Activated naive CD4-positive, alpha-beta T cell treated with anti-CD3 and anti-CD28 coated beads for 36 hours (primary cell): ENCODE measurements at regions of chr11 and their contacts with region 1.

Region 1: GRCh38 chr11:77127232-77127911 is 674 bp upstream of the MYO7A start:
- DNase-seq: peak; percentile 64
- H3K4me3 Mint-ChIP-seq: peak overlapping the region; percentile 59
- H3K27ac Mint-ChIP-seq: no peak overlapping the region
- H3K4me1 Mint-ChIP-seq: peaks cover 6% of the 10 kb centered on the region
- H3K27me3 Mint-ChIP-seq: no peaks in the 10 kb centered on the region

Region 2: DNA sequence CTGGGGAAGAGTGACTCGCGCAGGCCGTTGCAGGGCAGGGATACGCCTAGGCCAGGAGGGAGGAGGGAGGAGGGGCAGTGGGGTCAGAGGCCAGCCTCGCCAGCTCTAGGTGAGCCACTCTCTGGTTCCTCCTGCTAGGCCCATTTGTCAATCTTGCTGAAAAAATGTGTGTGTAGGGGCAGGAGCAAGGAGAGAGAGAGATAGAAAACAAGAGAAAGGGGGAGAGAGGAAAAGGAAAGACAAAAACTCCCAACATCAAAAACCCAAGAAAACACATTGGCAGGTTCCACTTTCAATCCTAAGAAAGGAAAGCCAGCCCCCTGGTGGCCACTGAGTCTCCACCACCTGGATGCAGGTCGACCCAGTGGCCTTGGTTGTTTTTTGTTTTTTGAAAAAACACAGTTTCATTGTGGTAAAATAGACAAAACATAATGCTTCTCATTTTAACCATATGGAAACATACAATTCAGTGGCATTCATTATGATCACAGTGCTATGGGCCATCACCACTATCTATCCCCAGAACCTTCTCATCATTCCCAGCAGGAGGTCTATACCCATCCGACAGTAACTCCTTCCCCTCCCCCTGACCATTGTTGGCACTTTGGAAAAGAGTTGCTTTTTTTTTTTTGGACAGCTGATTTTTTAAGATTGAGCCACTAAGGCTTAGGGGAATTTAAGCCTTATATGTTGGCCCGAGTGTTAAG is 13.8 kb before region 1 on chr11:
- CTCF ChIA-PET with region 1: interaction called, 10 read pairs
- intact Hi-C with region 1: no loop called
- DNase-seq: peak; percentile 56
- H3K4me3 Mint-ChIP-seq: no peak overlapping the region
- H3K27ac Mint-ChIP-seq: peak overlapping the region; percentile 18
- H3K4me1 Mint-ChIP-seq: no peaks in the 10 kb centered on the region
- H3K27me3 Mint-ChIP-seq: no peaks in the 10 kb centered on the region

Region 3: DNA sequence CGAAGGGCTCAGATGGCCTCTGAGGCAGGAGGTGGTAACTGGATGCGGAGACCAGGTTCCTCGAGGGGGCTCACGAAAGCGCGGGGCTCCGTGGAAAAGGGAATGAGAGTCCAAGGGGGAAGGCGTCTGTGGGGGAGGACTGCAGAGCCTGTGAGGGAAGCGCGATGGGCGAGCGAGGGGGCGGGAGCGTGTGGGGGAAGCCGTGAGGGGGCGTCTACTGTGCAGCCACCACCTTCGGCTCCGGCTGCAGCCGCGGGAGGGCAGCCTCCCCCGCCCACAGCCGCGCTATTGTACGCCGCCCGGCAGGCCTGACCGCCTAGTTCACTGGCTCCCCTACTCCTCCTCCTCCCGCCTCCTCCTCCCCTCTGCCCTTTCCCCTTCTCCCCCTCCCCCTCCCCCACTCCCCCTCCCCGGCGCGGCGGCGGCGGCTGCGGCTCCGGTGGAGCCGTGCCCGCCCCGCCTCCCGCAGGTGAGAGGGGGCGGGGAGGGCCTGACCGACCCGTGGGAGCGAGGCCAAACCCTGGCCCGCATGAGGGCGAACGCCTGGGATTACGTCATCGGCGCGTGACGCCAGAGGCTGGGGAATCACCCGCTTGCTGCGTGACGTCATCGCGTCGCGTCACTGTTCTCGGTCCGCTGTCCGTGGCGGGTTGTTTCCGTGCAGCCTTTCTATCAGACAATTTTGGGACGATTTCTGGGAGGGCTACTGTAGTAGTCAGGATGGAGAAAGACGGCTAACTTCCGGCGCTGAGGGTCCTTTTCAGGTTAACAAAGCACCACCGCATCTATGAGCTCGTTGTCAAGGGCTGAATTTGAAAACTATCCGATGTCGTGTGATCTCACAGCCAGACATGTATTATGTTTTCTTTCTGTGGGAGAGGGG is 346.7 kb after region 1 on chr11 and contains the start of gene PAK1:
- CTCF ChIA-PET with region 1: no interaction called
- intact Hi-C with region 1: loop called (anchors 5 kb)
- DNase-seq: peak; percentile 92
- H3K4me3 Mint-ChIP-seq: peak within 1 kb of the TSS; percentile 80
- H3K27ac Mint-ChIP-seq: peak within 1 kb of the TSS; percentile 74
- H3K4me1 Mint-ChIP-seq: peaks cover 13% of the 10 kb centered on the region
- H3K27me3 Mint-ChIP-seq: peaks cover 9% of the 10 kb centered on the region
- total RNA-seq, gene PAK1: 45.8 to 49.5 TPM

Region 4: GRCh38 chr11:77547863-77548551 is 420.6 kb after region 1 on chr11:
- CTCF ChIA-PET with region 1: interaction called, 26 read pairs
- intact Hi-C with region 1: loop called (anchors 1 kb)
- DNase-seq: peak; percentile 55
- H3K4me3 Mint-ChIP-seq: no peak overlapping the region
- H3K27ac Mint-ChIP-seq: no peak overlapping the region
- H3K4me1 Mint-ChIP-seq: peaks cover 2% of the 10 kb centered on the region
- H3K27me3 Mint-ChIP-seq: no peaks in the 10 kb centered on the region

Region 5: DNA sequence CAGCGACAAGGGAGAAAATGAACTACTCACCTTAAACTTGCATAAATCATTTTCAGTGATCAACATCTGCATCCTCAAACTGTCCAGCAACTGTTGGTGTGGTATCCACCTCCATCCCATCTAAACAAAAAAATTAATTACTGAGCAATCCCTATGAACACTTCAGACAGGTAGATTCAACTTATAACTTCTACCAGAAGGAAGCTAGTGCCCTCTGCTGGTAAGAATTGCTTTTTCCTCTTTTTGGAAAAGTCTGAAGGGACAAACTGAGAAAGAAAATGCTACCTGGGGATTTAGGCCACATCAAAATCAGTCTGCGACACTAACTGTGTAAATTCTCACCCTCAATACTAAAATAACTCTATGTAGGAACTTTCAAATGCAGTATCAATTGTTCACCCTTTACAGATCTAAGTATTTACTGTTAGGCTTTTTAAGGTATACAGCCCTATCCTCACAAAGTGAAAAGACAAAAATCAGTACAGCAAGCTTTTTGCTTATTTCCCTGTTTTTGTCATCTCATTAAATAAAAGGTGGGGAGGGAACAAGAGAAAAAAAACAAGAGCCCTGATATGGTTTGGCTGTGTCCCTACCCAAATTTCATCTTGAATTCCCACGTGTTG is 492.3 kb after region 1 on chr11:
- CTCF ChIA-PET with region 1: no interaction called
- intact Hi-C with region 1: loop called (anchors 1 kb)
- DNase-seq: no peak
- H3K4me3 Mint-ChIP-seq: no peak overlapping the region
- H3K27ac Mint-ChIP-seq: no peak overlapping the region
- H3K4me1 Mint-ChIP-seq: no peaks in the 10 kb centered on the region
- H3K27me3 Mint-ChIP-seq: no peaks in the 10 kb centered on the region